Endothelial cell of umbilical vein (primary cell): ENCODE measurements at regions of chr1 and their contacts with region 1.

Region 1: DNA sequence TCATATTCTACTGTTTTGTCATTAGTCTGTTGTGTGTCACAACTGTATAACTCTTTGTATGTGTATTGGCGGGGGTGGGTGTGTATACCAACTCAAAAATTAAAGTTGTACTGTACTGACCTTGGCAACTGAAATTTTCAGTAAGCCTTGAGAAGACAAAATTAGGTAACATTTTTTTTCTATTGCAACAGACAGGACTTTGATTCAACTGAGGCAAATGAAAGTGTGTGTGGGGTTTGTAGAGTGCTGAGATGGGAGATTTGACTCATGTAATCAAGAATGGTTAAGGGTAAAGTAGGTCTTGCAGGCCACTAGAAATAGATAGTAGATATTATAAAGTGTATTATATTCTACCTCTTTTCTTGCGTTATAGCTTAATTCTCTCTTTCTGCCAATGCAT is 14.6 kb upstream of the B3GALT2 start:
- DNase-seq: no peak
- H3K4me3 ChIP-seq: no peak overlapping the region
- H3K27ac ChIP-seq: no peak overlapping the region
- H3K4me1 ChIP-seq: no peaks in the 10 kb centered on the region
- H3K27me3 ChIP-seq: no peaks in the 10 kb centered on the region
- CTCF ChIP-seq: no peak
- POLR2A ChIP-seq: no peak

Region 2: DNA sequence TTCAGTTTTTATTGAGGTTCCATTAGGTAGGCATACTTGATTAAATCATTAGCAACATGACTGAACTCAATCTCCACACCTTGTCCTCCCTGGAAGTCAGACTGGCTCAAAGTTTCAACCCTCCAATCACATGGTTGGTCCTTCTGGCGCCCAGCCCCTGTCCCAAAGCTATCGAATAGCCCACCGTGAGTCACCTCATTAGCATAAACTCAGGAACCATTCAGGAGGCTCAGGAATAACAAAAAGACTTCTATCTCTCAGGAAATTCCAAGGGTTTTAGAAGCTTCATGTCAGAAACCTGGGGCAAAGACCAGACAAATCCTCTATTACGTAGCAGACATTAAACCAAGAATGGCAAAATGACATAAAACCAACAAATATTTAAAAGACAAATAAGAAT is 313.6 kb before region 1 on chr1:
- CTCF ChIA-PET with region 1: no interaction called
- POLR2A ChIA-PET with region 1: no interaction called
- dilution Hi-C with region 1: no loop called
- intact Hi-C with region 1: no loop called
- DNase-seq: no peak
- H3K4me3 ChIP-seq: no peak overlapping the region
- H3K27ac ChIP-seq: no peak overlapping the region
- H3K4me1 ChIP-seq: no peaks in the 10 kb centered on the region
- H3K27me3 ChIP-seq: no peaks in the 10 kb centered on the region
- CTCF ChIP-seq: no peak
- POLR2A ChIP-seq: no peak

Region 3: GRCh38 chr1:193121616-193122593 is 79.1 kb before region 1 on chr1 and contains the start of gene CDC73:
- CTCF ChIA-PET with region 1: no interaction called
- POLR2A ChIA-PET with region 1: no interaction called
- dilution Hi-C with region 1: no loop called
- intact Hi-C with region 1: no loop called
- DNase-seq: peak; percentile 97
- H3K4me3 ChIP-seq: peak within 1 kb of the TSS; percentile 77 to 96 (median 86)
- H3K27ac ChIP-seq: peak within 1 kb of the TSS; percentile 61
- H3K4me1 ChIP-seq: peaks cover 20% of the 10 kb centered on the region
- H3K27me3 ChIP-seq: no peaks in the 10 kb centered on the region
- CTCF ChIP-seq: peak; percentile 95 to 98
- POLR2A ChIP-seq: peak; percentile 70
- total RNA-seq, gene CDC73: 55.3 and 55.8 TPM in 2 replicates

Region 4: DNA sequence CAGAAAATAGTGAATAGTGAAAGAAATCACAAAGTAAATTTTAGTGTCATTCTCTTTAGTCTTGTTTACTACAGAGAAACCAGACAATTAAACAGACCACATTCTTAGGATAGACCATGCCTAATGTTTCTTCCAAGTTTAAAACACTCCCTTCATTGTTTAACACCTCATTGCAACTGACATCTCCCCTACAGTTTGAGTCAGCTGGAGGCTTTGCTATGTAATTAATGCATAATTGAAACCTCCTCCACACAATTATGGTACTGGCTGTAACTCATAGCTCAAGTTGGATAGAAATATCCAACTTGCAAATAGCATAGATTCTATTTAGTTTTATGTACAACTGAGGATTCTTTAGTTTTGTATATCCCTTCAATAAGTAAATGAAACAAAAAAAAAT is 20.6 kb after region 1 on chr1:
- CTCF ChIA-PET with region 1: no interaction called
- POLR2A ChIA-PET with region 1: no interaction called
- dilution Hi-C with region 1: no loop called
- intact Hi-C with region 1: loop called (anchors 2 kb)
- DNase-seq: no peak
- H3K4me3 ChIP-seq: no peak overlapping the region
- H3K27ac ChIP-seq: no peak overlapping the region
- H3K4me1 ChIP-seq: no peaks in the 10 kb centered on the region
- H3K27me3 ChIP-seq: no peaks in the 10 kb centered on the region
- CTCF ChIP-seq: no peak
- POLR2A ChIP-seq: no peak